ENCODE measurements at regions of chr1 and their contacts with region 1.

Region 1: DNA sequence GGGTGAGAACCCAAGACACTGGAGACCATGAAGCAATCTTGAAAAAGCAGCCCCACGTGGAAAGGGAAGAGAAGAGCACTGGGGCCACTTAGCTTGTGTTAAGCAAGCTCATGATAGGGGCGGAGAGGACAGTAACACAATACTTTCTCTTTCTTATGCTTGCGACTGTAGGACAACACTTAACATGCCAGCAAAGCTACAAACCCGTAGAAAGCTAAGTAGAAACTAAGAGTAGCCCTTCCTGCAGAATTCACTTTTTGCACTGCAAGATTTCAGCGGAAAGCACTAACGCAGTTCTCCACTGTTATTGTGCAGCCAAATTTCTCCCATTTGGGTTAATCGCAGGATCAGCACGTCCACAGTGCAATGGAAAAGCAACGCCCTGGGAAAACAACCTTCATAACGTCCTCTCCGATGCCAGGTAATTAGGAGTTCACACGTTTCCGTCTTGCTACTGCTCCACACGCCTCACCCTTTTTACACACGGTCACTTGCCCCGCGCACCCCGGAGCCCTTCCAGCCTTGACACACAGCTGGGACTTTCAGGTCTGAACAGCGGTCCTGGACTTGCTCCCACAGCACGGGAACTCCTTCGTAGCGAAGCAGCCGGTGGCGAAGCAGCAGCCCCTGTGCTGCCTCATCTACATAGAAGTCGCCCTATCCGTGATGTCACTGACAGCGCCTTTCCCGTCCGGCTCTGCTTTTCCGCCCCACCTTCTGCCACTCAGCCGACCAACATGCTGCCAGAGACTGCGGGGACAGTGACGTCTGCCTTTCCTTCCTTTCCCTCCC is 148.6 kb downstream of the PPIAL4G start:
- DNase-seq: peak; percentile 98
- ATAC-seq: peak; percentile 88
- H3K4me3 ChIP-seq: peak overlapping the region; percentile 50 to 56
- H3K27ac ChIP-seq: peak overlapping the region; percentile 89
- H3K4me1 ChIP-seq: peaks cover 9 to 27% of the 10 kb centered on the region in 2 experiments
- H3K27me3 ChIP-seq: no peaks in the 10 kb centered on the region
- CTCF ChIP-seq: no peak
- POLR2A ChIP-seq: peak; percentile 100
- RAD21 ChIP-seq: peak; percentile 41

Region 2: GRCh38 chr1:148272901-148273300 is 61.6 kb before region 1 on chr1:
- CTCF ChIA-PET with region 1: no interaction called
- POLR2A ChIA-PET with region 1: interaction called, 366 read pairs
- RAD21 ChIA-PET with region 1: no interaction called
- intact Hi-C with region 1: no loop called
- DNase-seq: no peak
- ATAC-seq: no peak
- H3K4me3 ChIP-seq: no peak overlapping the region
- H3K27ac ChIP-seq: no peak overlapping the region
- H3K4me1 ChIP-seq: no peaks in the 10 kb centered on the region; a peak in 1 of 4 replicates
- H3K27me3 ChIP-seq: no peaks in the 10 kb centered on the region
- CTCF ChIP-seq: no peak
- POLR2A ChIP-seq: no peak
- RAD21 ChIP-seq: no peak

Region 3: DNA sequence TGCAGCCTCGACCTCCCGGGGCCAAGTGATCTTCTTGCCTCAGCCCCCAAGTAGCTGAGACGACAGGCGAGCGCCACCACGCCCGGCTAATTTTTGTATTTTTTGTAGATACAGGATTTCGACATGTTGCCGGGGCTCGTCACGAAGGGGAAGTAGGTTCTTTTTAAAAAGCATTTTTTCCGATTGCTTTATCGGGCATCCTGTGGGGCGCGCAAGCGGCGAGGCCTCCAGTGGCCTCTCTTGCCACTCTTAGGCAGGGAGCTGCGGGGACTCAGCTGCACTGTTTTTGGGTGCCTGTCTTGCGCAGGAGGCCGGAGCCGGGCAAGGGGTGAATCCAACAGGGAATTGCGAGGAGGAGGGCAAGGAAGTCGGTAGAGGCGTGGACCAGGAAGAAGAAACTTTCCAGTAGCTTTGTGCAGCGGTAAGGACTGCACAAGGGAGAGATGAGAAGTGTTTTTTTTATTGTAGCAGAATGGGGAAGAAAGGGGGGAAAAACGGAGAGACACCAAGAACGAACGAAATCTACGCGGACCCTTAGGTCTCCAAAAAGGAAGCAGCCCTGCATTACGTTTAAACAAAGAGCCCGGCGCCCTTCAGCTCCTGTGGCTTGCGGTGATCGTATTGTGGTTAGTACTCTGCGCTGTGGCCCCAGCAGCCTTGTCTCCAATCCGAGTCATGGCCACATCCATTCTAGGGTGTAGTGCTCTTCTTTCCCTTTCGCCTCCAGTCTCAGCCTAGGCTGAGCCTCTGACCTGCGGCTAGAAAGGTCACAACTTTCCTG is 16.2 kb before region 1 on chr1:
- CTCF ChIA-PET with region 1: no interaction called
- POLR2A ChIA-PET with region 1: interaction called, 20 read pairs
- RAD21 ChIA-PET with region 1: no interaction called
- intact Hi-C with region 1: no loop called
- DNase-seq: no peak
- ATAC-seq: no peak
- H3K4me3 ChIP-seq: no peak overlapping the region
- H3K27ac ChIP-seq: no peak overlapping the region
- H3K4me1 ChIP-seq: no peaks in the 10 kb centered on the region
- H3K27me3 ChIP-seq: no peaks in the 10 kb centered on the region
- CTCF ChIP-seq: no peak
- POLR2A ChIP-seq: no peak
- RAD21 ChIP-seq: no peak

Region 4: GRCh38 chr1:148353461-148354283 is 19.1 kb after region 1 on chr1:
- CTCF ChIA-PET with region 1: no interaction called
- POLR2A ChIA-PET with region 1: interaction called, 17 read pairs
- RAD21 ChIA-PET with region 1: no interaction called
- intact Hi-C with region 1: no loop called
- DNase-seq: peak; percentile 81
- ATAC-seq: peak; percentile 97
- H3K4me3 ChIP-seq: no peak overlapping the region
- H3K27ac ChIP-seq: no peak overlapping the region
- H3K4me1 ChIP-seq: peaks cover 0 to 11% of the 10 kb centered on the region in 2 experiments; a peak in 1 of 4 replicates
- H3K27me3 ChIP-seq: no peaks in the 10 kb centered on the region
- CTCF ChIP-seq: no peak
- POLR2A ChIP-seq: no peak
- RAD21 ChIP-seq: no peak

Region 5: DNA sequence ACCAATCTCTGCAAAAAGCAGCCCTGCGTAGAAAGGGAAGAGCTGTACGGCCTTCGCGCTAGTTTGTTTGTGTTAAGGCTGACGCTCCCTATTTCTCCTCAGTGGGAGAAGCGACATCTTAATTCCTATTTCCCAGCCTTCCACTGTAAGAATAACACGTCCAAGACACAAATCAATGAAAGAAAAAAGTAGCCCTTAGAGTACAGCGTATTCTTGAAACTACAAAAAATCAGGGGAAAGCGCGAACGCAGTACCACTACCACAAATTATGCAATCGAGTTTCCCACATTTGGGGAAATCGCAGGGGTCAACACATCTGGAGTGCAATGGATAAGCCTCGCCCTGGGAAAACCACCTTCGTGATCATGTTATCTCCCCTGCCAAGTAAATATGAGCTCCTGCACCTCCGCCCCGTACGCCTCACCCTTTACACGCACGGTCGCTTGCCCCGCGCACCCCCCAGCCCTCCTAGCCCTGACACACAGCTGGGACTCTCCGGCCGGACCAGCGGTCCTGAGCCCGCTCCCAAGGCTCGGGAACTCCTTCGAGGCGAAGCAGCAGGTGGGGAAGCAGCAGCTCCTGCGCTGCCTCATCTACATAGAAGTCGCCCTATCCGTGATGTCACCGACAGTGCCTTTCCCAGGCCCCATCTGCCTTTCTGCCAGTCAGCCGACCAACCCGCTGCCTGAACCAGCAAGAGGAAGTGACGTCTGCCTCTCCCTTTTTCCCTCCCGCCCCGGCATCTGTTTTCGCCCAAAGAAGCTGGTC is 53.9 kb after region 1 on chr1:
- CTCF ChIA-PET with region 1: no interaction called
- POLR2A ChIA-PET with region 1: interaction called, 16 read pairs
- RAD21 ChIA-PET with region 1: no interaction called
- intact Hi-C with region 1: no loop called
- DNase-seq: peak; percentile 79
- ATAC-seq: peak; percentile 89
- H3K4me3 ChIP-seq: peak overlapping the region; percentile 29 to 54
- H3K27ac ChIP-seq: peak overlapping the region; percentile 73
- H3K4me1 ChIP-seq: peaks cover 0 to 18% of the 10 kb centered on the region in 2 experiments; a peak in 2 of 4 replicates
- H3K27me3 ChIP-seq: no peaks in the 10 kb centered on the region
- CTCF ChIP-seq: no peak
- POLR2A ChIP-seq: peak; percentile 99
- RAD21 ChIP-seq: no peak